AG04449 (cell line): ENCODE measurements at regions of chr1 and their contacts with region 1.

Region 1: DNA sequence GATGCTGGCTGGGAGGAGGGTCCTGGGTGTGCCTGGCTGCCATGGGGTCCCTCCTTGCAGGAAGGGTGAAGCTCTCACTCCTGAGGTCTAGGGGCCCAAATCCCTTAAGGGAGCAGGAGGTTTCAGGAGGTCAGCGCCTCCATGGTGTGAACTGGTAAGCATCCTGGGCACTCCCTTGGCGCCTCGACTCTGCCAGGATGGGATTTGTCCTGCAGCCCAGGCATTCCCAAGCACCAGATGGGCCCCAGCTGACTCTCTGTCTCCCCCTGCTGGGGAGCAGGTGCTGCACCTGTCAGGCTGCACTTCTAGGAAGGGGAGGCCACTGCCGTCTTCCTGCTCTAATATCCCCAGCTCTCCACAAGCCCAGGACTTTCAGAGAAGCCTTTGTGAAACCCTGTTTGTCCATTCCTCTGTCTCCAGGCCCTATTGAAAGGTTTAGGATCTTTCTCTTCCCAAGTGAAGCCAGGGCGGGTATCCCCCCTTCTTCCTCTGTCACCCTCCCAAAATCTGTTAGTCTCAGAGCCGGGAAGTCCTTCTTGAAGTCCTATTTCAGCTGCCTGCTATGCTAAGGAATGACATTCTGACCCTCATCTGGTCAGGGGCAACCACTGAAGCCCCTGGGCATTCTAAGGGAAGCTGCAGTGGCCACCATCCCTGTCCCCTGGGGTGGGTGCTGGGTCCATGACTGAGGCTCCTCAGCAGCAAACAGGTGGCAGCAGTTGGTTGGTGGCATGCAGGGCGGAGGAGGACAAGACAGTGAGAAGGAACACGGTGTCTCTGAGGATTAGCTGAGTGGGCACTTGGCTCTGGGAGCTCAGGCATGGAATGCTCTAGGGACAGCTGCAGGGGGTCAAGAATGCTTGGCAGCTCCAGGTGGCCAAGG is 3.3 kb downstream of the MYBPH start:
- DNase-seq: no peak
- H3K4me3 ChIP-seq: no peak overlapping the region
- CTCF ChIP-seq: peak; percentile 91

Region 2: DNA sequence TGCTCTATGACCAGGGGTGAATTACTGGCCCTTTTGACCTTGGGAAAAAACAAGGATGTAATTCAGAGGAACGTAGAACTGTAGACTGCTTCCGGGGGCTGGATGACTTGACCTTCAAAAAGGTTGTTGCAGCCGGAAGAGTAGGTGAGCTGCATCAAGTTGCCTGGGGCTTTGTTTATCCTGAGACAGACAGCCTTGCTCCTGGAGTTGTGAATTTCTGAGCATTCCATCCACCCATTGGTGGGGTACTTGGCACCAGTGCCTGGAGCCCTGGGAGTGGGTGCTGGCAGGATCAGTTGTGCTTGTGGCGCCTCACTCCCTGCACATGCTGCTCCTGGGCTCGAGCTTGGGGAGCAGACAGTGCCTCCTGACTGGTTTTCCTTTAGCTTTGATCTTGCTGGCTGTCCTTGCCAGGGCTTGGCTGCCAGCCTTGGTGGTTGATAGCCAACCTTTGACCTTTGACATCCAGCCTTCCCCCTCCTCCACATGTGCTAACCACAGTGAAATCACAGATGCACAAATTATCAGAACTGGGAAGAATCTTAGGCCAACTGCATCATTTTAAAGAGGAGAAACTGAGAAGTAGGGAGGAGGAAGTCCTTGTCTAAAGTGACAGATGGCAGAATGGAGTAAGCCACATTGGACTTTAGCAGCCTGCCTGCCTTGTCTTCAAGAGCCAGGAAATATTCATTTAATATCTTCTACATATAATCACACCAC is 70.3 kb before region 1 on chr1:
- CTCF ChIA-PET with region 1: no interaction called
- POLR2A ChIA-PET with region 1: no interaction called
- DNase-seq: no peak
- H3K4me3 ChIP-seq: no peak overlapping the region
- CTCF ChIP-seq: no peak

Region 3: GRCh38 chr1:203117611-203118575 is 54.5 kb before region 1 on chr1:
- CTCF ChIA-PET with region 1: interaction called, 102 read pairs
- POLR2A ChIA-PET with region 1: no interaction called
- DNase-seq: no peak
- H3K4me3 ChIP-seq: no peak overlapping the region
- CTCF ChIP-seq: peak; percentile 96

Region 4: GRCh38 chr1:203133970-203134725 is 38.2 kb before region 1 on chr1:
- CTCF ChIA-PET with region 1: interaction called, 65 read pairs
- POLR2A ChIA-PET with region 1: no interaction called
- DNase-seq: no peak
- H3K4me3 ChIP-seq: no peak overlapping the region
- CTCF ChIP-seq: no peak

Region 5: GRCh38 chr1:203148125-203148524 is 24.2 kb before region 1 on chr1:
- CTCF ChIA-PET with region 1: interaction called, 35 read pairs
- POLR2A ChIA-PET with region 1: no interaction called
- DNase-seq: no peak
- H3K4me3 ChIP-seq: no peak overlapping the region
- CTCF ChIP-seq: peak; percentile 3

Region 6: DNA sequence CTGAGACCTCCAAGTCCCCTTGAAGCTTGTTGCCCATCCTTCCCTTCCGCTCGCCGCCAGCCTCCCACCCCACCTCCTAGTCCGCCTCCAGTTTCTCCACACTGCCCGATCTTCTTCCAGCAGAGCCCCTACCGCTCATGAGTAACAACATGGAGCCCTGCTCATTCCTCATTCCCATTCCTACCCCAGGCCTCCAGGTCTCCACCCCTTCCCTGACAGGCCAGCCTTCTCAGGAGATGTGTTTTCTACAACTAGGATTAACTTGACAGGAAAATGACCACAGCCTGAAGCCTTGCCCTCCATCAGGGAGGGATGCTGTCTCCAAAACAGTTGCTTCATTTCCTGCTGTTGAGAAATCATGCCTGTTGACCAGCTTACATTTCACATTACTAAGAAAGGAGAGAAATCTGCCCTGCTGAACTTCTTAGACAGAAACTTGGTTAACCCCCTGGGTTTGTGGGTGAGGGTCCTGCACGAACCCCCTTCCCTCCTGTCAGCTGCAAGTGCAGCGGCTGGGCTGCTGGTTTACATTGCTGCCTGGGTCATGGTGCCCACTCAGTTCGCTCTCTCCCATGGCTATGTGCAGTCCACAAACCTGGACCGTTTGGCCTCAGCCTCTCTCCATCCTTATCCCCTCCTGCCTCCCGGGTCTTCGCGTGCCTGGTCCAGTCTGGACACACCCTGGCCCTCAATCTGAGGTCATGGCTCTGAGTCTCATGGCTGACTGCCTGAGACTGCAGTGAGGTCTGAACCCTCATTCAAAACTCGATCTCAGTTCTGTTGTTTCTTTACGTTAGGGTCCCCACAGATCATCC is 30.3 kb after region 1 on chr1:
- CTCF ChIA-PET with region 1: interaction called, 18 read pairs
- POLR2A ChIA-PET with region 1: no interaction called
- DNase-seq: no peak
- H3K4me3 ChIP-seq: no peak overlapping the region
- CTCF ChIP-seq: no peak

Region 7: DNA sequence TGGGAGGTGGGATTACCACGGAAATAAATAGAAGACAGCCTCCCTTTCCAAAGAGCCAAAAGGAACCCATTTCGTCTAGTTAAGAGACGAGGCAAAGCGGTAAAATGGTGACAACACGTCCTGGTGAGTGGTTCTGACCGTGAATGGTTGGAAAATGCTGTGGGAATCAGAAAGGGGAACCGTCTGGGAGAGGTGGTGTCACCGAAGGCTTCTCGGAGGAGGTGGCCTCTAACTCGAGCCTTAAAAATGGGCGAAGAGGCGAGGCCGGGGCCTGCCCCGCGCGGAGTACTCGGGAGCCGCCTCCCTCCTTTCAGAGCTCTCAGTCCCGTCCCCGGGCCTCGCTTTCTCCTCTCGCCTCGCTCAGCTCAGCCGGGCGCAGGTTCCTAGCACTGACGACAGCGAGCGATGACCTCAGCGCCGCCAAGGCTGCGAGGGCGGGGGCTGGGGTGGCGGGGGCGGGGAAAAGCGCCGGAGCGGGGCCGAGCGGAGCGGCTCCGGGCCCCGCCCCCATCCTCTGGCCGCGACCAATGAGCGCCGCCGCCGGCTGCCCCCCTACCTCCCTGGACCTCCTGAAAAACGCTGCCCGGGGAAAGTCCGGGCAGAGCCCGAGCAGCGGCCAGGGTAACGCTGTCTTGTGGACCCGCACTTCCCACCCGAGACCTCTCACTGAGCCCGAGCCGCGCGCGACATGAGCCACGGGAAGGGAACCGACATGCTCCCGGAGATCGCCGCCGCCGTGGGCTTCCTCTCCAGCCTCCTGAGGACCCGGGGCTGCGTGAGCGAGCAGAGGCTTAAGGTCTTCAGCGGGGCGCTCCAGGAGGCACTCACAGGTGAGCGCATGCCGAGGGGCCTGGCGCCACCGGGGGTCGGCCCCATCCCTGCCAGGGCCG is 132.8 kb after region 1 on chr1 and contains the start of gene BTG2:
- CTCF ChIA-PET with region 1: no interaction called
- POLR2A ChIA-PET with region 1: no interaction called
- DNase-seq: no peak
- H3K4me3 ChIP-seq: peak within 1 kb of the TSS; percentile 85
- CTCF ChIP-seq: no peak